Posterior cingulate gyrus (tissue), 11 donors: ENCODE measurements at regions of chr10 and their contacts with region 1.

Region 1: GRCh38 chr10:110137142-110137545 is 70.3 kb upstream of the MXI1 start:
- DNase-seq: no peak

Region 2: DNA sequence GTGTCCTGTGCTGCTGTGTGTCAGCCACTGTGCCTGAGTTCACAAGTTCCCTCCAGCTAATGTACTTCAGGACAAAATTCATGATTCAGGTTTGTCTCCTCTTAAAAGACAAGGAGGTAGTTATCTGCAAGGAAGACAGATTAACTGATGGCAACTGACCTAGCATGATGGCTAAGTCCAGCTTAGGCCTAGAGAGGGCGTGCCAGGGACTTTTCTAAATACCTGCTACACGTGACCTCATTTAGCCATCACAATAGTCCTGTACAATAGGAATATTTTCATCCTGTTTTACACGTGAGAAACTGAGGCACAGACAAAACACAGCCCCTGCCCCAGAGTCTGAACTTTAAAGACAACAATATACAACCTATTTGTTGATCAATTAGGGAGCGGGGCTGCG is 489.5 kb before region 1 on chr10:
- intact Hi-C with region 1: no loop called
- DNase-seq: no peak

Region 3: DNA sequence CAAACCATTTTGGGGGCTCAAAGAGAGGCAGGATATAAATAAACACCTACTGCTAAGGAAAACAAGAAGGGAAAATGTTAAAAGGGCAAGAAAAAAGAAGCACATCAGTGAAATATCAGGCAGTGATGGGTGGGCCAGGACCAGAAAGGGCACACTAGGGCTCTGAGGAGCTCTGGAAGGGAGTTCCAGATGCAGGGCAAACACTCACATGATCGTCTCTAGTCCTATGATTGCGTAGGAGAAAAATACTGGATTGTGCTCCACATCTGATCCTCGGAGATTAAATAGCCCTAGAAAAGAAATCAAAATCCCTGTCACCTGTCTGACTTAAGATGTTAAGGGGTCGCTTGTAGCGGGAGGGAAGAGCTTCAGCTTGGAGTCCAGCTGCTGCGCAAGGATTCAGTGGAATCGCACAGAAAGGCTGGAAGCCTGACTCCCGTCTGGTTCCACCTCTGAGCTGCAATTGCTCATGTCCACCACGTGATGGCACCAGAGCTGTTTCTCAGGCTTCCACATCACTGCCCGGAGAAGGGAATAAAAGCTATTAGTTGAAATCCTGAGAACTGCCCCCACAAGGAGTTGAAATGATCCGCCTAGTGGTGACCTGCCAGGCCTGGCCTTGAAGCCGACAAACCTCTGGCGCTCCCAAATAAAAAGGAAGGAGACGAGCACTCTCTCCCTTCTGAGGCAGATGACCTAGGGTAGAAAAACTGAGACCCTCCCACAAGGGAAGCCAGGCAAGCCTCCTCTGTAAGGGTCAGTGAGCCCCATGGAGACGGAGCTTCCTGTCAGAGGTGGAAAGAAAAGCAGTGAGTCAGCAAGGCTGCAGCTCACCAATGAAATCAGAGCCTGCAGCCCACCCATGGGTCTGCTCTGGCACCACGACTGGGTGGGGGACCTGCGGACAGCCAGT is 253.0 kb before region 1 on chr10:
- intact Hi-C with region 1: loop called (anchors 5 kb)
- DNase-seq: peak; percentile 61 to 97 (median 72)

Region 4: DNA sequence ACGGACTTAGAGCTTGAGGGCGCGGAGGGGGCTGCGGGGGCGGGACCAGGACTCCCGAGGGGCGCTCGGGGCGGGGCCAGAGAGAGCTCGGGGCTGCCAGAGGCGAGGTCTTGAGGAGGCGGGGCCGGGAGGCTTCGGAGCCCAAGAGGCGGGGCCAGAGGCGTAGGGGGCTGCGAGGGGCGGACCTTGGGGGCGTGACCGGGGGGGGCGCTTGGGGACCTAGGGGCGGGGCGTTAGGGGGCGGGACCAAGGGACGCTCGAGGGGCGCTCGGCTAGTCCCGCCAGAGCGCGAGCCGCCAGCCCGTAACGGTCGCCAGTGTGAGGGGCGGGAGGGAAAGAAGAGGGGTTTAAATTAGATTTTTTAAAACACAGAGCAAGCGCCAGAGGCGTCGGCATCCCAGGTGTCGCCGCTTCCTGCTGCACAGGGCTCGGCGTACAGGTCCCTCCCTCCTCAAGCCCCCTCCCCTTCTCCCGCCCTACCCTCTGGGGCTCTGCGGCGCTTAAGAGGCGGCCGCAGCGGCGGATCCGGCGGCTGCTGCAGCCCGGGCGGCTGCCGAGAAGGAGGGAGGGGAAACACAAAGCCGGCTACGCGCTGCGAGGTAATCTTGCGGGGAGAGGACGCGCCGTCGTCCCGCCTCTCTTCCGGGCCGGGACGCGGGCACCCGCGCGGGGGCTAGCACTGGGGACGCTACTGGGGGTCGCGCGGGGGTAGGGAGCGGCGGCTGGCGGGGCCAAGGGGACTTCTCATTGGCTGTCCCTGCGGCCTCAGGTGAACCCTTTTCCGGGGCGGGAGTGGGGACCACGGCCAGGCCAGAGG is 129.2 kb before region 1 on chr10 and contains the start of gene ADD3:
- intact Hi-C with region 1: loop called (anchors 10 kb)
- DNase-seq: peak; percentile 90 to 99 (median 95)

Region 5: DNA sequence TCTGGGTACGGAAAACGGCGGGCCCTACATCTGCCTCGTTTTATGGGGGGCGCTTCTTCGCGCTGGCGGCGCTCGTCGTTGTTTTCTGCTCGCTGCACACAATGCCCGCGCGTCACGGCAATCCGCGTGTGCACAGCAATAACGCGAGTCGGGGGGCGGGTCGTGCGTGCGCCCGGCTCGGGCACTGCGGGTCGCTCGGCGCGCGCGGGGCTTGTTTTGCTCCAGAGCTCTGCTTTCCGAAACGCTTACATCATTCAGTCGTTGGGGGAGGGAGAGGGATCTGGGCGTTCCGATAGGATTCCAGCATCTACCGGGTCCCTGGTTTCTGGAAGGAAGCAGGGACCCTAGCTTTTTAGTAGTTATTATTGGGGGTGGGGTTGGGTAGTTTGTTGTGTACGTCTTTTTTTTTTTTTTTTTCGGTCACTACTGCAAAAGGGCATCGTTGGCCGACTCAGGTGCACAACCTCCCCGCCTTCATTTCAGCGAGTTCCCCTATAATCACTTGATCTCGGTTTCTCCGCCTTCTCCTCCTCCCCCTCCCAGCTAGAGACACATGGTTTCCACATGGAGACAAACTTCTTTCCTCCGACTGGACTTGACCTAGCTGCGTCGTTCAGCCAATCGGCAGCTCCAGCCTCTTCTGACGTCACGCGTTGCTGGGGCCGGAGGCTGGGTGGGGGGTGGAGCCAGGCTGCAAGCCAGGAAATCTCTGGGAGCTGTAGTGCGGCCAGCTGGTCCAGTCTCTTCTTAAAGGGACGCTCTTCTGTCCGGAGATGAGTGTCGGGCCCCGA is 73.7 kb after region 1 on chr10:
- intact Hi-C with region 1: loop called (anchors 5 kb)
- DNase-seq: peak; percentile 98 to 100 (median 99)

Region 6: DNA sequence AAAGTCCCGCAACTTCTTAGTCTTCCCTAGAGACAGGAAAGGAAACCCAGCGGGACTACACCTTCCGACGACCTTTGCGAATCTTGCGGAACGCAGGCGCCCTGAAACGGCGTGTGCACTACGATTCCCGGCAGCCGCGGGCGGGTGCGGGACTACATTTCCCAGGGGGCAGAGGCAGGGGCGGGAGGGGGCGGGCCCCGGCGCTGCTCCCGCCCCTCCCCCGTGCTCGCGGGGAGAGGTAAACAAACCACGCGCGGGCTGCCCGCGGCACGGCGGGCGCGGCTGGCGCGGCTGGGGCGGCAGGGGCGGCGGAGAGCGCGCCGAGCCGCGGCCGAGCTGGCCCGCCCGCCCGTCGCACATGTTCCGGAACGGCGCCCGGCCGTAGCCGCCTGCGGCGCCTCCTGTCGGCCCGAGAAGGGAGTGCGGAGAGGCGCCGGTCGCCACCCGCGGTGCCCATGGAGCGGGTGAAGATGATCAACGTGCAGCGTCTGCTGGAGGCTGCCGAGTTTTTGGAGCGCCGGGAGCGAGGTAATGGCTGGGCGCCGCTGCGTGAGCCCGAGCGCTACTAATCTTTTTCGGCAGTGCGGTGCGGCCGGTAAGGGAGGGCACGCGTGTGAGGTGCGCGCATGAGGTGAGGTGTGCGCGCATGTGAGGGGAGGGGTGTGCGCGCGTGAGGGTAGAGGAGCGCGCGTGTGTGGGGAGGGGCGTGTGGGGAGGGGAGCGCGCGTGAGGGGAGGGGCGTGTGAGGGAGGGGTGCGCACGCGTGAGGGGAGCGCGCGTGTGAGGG is 88.8 kb after region 1 on chr10:
- intact Hi-C with region 1: loop called (anchors 2 kb)
- DNase-seq: peak; percentile 85 to 99 (median 90)

Region 7: GRCh38 chr10:110279407-110279986 is 142.4 kb after region 1 on chr10:
- intact Hi-C with region 1: loop called (anchors 1 kb)
- DNase-seq: peak in 4 of 10 donors; percentile 52 to 70 (median 56)

Region 8: DNA sequence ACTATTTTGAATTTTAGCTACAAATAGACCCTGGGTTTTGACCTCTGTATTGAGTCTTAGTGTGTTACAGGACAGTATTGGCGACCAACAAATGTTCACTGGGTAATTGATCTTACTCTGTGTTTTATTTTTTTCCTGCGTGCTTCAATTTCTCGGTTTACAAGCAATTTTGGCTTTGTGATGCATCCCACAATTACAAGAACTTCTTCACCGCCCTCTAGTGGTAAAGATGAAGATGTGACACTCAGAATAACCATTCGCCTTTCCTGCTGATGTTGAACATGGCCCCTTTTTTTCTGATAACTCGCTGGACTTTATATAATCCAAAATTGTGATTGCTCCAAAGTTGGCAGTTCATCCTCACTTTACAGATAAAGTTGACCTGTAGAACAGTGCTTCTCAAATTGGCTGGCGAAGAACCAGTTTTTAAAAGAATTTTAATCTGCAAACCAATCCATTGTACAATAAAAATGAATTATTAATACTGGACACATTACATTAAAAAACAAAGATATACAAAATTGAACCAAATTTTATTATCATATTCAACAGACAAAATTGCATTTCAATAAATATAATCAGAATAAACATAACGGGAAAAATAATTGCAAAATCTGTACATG is 410.1 kb after region 1 on chr10:
- intact Hi-C with region 1: loop called (anchors 5 kb)
- DNase-seq: no peak